ENCODE measurements at regions of chr19 and their contacts with region 1.

Region 1: DNA sequence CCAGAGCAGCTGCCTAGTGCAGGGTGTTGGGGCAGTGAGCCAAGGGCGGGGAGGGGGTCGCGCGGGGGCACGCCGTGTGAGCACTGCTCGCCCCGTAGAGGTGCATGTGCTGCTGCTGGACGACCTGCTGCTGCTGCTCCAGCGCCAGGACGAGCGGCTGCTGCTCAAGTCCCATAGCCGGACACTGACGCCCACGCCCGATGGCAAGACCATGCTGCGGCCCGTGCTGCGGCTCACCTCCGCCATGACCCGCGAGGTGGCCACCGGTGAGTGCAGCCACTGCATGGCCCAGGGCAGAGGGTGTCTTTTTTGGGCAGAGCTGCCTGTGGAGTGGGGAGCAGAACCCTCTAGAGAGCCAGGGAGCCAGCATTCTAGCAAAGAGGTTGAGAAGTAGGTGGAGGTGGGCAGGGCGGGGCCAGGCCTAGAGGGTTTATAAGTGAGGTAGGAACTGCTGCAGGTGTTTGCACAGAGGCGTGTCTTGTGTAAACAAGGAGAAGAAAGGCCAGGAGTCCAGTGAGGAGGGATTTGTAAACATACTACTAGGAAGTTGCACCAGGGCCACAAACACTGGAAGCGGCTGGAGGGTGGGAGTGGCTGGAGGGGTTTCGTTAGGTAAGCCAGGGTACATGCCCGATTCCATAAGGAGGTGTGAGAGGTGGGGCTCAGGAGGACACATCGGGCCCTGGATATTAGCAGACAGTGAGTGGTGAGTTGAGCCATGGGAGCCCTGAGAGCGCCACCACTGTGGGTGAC is 21.3 kb downstream of the ARHGEF1 start:
- DNase-seq: peak; percentile 79 to 94
- ATAC-seq: peak; percentile 20 to 70; a peak in 5 of 6 replicates
- H3K4me3 ChIP-seq: peak overlapping the region; percentile 7; the same call in 1 of the 3 replicates
- H3K27ac ChIP-seq: peak overlapping the region; percentile 42 to 78; a peak in 5 of 6 replicates
- H3K4me1 ChIP-seq: peaks cover 46% of the 10 kb centered on the region
- CTCF ChIP-seq: no peak
- EP300 ChIP-seq: no peak
- POLR2A ChIP-seq: no peak
- RAD21 ChIP-seq: no peak

Region 2: GRCh38 chr19:41893899-41894298 is 10.4 kb before region 1 on chr19:
- CTCF ChIA-PET with region 1: interaction called, 18 read pairs
- POLR2A ChIA-PET with region 1: no interaction called
- DNase-seq: peak in 1 of 2 experiments; percentile 87
- ATAC-seq: peak; percentile 25 to 63
- H3K4me3 ChIP-seq: no peak overlapping the region
- H3K27ac ChIP-seq: peak overlapping the region in 1 of 2 experiments; percentile 42; a peak in 1 of 6 replicates
- H3K4me1 ChIP-seq: peaks cover 14% of the 10 kb centered on the region; the same call in 2 of the 3 replicates
- CTCF ChIP-seq: no peak
- EP300 ChIP-seq: no peak
- POLR2A ChIP-seq: no peak
- RAD21 ChIP-seq: no peak

Region 3: DNA sequence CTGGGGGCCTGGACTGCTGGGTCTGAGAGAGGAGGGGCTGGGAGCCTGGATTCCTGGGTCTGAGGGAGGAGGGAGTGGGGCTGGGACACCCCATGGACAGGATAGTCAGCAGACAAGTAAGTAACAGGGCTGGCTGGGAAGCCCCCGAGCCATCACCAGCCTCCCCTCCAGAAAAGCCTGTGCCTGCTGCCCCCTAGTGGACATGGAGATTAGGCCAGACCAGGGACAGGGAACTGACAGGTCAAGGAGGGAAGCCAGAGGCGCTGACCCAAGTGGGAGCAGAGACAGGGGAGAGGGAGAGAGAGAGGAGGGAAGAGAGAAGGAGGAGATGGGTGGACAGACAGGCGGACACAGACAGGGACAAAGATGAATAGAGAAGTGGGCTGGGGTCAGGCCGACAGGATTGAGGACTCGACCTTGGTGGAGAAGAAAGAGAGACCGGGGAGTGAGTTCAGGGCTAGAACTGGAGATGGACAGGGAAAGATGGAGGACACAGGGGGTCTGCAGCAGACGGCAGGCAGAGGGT is 30.6 kb after region 1 on chr19:
- CTCF ChIA-PET with region 1: interaction called, 15 read pairs
- POLR2A ChIA-PET with region 1: no interaction called
- DNase-seq: peak; percentile 80 to 96
- ATAC-seq: peak; percentile 48 to 88
- H3K4me3 ChIP-seq: no peak overlapping the region
- H3K27ac ChIP-seq: no peak overlapping the region
- H3K4me1 ChIP-seq: 0 out of 3 replicates have a peak, but pooled peaks cover 3% of the 10 kb centered on the region
- CTCF ChIP-seq: peak; percentile 96
- EP300 ChIP-seq: no peak
- POLR2A ChIP-seq: no peak
- RAD21 ChIP-seq: peak; percentile 77 to 90